ENCODE measurements at regions of chr10 and their contacts with region 1.

Region 1: GRCh38 chr10:86710987-86711512 is 42.7 kb downstream of the LDB3 start:
- DNase-seq: peak; percentile 95
- H3K4me3 ChIP-seq: peak overlapping the region; percentile 64
- H3K27ac ChIP-seq: peak overlapping the region; percentile 90
- H3K4me1 ChIP-seq: peaks cover 24% of the 10 kb centered on the region
- H3K27me3 ChIP-seq: no peaks in the 10 kb centered on the region
- CTCF ChIP-seq: peak; percentile 78

Region 2: GRCh38 chr10:86747796-86748581 is 36.9 kb after region 1 on chr10:
- CTCF ChIA-PET with region 1: no interaction called
- POLR2A ChIA-PET with region 1: no interaction called
- intact Hi-C with region 1: loop called (anchors 2 kb)
- DNase-seq: peak; percentile 99
- H3K4me3 ChIP-seq: peak overlapping the region; percentile 7
- H3K27ac ChIP-seq: peak overlapping the region; percentile 90
- H3K4me1 ChIP-seq: peaks cover 58% of the 10 kb centered on the region
- H3K27me3 ChIP-seq: no peaks in the 10 kb centered on the region
- CTCF ChIP-seq: no peak

Region 3: DNA sequence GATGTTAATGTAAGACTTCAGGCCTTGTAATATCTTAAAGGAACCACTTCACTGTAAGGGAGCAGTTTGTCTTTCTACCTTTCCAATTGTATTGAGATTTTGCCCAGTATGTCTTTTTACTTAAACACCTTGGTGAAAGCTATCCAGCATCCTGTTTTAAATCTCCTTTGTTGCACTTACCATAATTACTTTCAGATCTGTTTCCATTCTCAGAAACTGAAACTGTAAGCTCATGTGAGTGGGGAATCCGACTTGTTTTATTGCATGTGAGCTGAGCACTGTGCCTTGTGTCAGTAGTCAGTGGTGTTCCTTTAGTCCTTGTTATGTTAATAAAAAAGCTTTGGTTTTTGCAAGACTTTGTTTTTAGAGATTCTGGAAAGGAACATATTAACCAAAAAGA is 87.6 kb after region 1 on chr10:
- CTCF ChIA-PET with region 1: no interaction called
- POLR2A ChIA-PET with region 1: interaction called, 4 read pairs
- intact Hi-C with region 1: loop called (anchors 5 kb)
- DNase-seq: peak; percentile 70
- H3K4me3 ChIP-seq: peak overlapping the region; percentile 23
- H3K27ac ChIP-seq: peak overlapping the region; percentile 77
- H3K4me1 ChIP-seq: peaks cover 91% of the 10 kb centered on the region
- H3K27me3 ChIP-seq: no peaks in the 10 kb centered on the region
- CTCF ChIP-seq: no peak

Region 4: DNA sequence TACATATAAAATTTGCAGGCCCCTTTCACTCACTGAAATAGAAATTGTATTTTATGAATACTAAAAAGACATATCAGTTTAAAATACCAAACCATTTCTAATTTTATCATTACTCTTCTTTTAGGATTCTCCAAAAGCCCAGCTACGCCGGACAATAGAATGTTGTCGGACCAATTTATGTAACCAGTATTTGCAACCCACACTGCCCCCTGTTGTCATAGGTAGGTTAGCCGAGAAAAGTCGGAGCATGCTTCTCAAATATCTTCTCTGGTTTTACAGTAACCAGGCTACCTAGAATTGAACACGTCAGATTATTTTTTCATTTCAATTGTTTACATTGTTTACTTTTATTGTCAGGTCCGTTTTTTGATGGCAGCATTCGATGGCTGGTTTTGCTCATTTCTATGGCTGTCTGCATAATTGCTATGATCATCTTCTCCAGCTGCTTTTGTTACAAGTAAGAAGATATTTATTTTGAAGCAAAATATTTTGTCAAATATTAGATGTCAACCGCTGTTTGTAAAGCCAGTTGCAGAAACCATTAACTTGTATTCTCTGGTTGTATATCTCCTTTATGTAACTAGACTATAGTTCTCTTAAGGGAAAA is 188.7 kb after region 1 on chr10:
- CTCF ChIA-PET with region 1: interaction called, 3 read pairs
- POLR2A ChIA-PET with region 1: no interaction called
- intact Hi-C with region 1: loop called (anchors 1 kb)
- DNase-seq: peak; percentile 83
- H3K4me3 ChIP-seq: no peak overlapping the region
- H3K27ac ChIP-seq: no peak overlapping the region
- H3K4me1 ChIP-seq: peaks cover 26% of the 10 kb centered on the region
- H3K27me3 ChIP-seq: no peaks in the 10 kb centered on the region
- CTCF ChIP-seq: peak; percentile 82

Region 5: GRCh38 chr10:86918022-86918471 is 207.0 kb after region 1 on chr10:
- CTCF ChIA-PET with region 1: no interaction called
- POLR2A ChIA-PET with region 1: no interaction called
- intact Hi-C with region 1: loop called (anchors 5 kb)
- DNase-seq: peak; percentile 77
- H3K4me3 ChIP-seq: no peak overlapping the region
- H3K27ac ChIP-seq: peak overlapping the region; percentile 67
- H3K4me1 ChIP-seq: peaks cover 12% of the 10 kb centered on the region
- H3K27me3 ChIP-seq: no peaks in the 10 kb centered on the region
- CTCF ChIP-seq: no peak

Measured in A673 (cell line).